ENCODE measurements at regions of chr3 and their contacts with region 1.

Region 1: DNA sequence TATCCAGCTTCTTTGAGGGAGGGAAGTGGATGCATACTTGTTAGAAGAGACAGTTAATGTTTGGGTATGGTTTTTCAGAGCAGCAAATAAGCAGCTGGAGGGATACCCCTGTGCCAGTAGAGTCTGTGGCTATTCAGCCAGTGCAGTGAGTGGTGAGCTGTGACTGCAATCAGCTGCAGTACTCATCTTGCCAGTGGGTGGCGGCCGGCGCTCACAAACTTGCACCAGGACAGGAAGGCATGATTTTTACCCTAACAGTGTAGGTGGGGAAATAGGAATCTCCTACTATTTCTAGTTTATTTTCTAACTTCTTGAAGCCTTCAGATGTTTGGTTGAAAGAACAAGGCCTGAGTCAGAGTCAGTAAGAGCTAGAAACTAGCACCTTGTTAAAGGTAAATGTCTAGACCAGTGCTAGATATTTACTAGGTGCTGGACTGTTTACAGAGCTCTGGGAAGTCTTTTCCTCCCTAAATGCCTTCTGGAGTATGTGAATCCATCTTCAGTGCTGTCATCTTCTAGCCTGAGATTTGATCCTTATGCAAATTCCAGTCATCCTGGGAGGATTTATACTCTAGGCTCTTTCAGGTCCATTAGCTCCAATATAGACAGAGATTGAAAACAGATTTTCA is 23.6 kb downstream of the TIMP4 start:
- DNase-seq: peak; percentile 55 to 72 (median 69)
- H3K4me3 ChIP-seq: no peak overlapping the region
- H3K27ac ChIP-seq: no peak overlapping the region
- H3K4me1 ChIP-seq: peaks cover 0 to 8% (median 1%) of the 10 kb centered on the region in 4 experiments
- H3K27me3 ChIP-seq: peaks cover 0 to 6% (median 4%) of the 10 kb centered on the region in 5 experiments

Region 2: DNA sequence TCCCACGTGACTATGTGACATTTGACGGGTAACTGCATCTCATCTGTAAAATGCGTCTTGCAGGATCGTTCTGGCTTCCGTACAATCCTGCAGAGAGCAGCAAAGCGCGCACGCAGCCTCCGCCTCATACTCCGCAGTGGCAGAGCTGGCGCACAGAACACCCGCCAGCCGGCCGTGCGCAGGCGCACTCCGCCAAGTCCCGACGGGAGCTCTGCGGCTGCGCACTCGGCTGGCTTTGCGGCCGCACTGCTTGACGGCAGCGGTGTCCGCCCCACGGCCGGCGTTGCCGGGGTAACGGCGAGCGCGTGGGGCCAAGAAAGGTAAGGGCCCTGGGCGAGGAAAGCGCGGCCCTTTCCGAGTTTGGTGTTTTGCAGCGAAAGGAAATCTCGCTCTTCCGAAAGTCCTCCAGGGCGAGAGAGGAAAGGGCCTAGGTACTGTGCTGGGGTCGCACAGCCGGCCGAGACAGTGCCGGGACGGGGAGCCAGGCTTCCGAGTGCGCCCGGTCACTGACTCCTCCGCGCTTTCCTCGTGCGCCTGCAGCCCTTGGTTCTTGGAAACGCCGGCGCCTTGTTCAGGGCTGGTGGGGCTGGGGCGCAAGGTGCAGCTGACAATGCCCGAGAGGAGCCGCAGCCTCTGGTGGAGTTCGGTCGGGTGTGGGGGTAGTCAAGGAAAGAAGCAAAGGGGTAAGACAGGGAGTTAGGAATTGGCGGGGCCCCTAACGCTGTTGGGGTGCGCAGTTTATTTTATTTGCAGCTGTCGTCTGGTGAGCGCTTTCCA is 349.2 kb after region 1 on chr3 and contains the start of gene TSEN2:
- CTCF ChIA-PET with region 1: interaction called, 124 read pairs
- POLR2A ChIA-PET with region 1: no interaction called
- DNase-seq: peak; percentile 95 to 98 (median 97)
- H3K4me3 ChIP-seq: peak within 1 kb of the TSS; percentile 68 to 96 (median 86)
- H3K27ac ChIP-seq: peak within 1 kb of the TSS; percentile 29 to 81
- H3K4me1 ChIP-seq: peaks cover 14 to 30% (median 25%) of the 10 kb centered on the region in 4 experiments
- H3K27me3 ChIP-seq: no peaks in the 10 kb centered on the region